ENCODE measurements at regions of chr16 and their contacts with region 1.

Region 1: GRCh38 chr16:89700100-89700648 is 1.3 kb downstream of the SPATA2L start:
- DNase-seq: peak; percentile 96
- H3K4me3 Mint-ChIP-seq: peak overlapping the region; percentile 74
- H3K27ac Mint-ChIP-seq: peak overlapping the region; percentile 78
- H3K4me1 Mint-ChIP-seq: peaks cover 31% of the 10 kb centered on the region
- H3K27me3 Mint-ChIP-seq: no peaks in the 10 kb centered on the region

Region 2: GRCh38 chr16:89686520-89687091 is 13.6 kb before region 1 on chr16 and contains the start of gene CDK10:
- CTCF ChIA-PET with region 1: interaction called, 22 read pairs
- POLR2A ChIA-PET with region 1: no interaction called
- DNase-seq: peak; percentile 88
- H3K4me3 Mint-ChIP-seq: peak within 1 kb of the TSS; percentile 92
- H3K27ac Mint-ChIP-seq: peak within 1 kb of the TSS; percentile 90
- H3K4me1 Mint-ChIP-seq: peaks cover 24% of the 10 kb centered on the region
- H3K27me3 Mint-ChIP-seq: no peaks in the 10 kb centered on the region
- total RNA-seq, gene CDK10: 83.1 to 96.8 TPM

Region 3: GRCh38 chr16:89720813-89721545 is 20.8 kb after region 1 on chr16 and contains the starts of genes VPS9D1 and ZNF276:
- CTCF ChIA-PET with region 1: interaction called, 46 read pairs
- POLR2A ChIA-PET with region 1: no interaction called
- DNase-seq: peak; percentile 84
- H3K4me3 Mint-ChIP-seq: peak within 1 kb of the TSS; percentile 99
- H3K27ac Mint-ChIP-seq: peak within 1 kb of the TSS; percentile 98
- H3K4me1 Mint-ChIP-seq: peaks cover 31% of the 10 kb centered on the region
- H3K27me3 Mint-ChIP-seq: no peaks in the 10 kb centered on the region
- total RNA-seq, gene VPS9D1: 10.8 to 13.4 TPM
- total RNA-seq, gene ZNF276: 79.5 to 96.5 TPM

Region 4: DNA sequence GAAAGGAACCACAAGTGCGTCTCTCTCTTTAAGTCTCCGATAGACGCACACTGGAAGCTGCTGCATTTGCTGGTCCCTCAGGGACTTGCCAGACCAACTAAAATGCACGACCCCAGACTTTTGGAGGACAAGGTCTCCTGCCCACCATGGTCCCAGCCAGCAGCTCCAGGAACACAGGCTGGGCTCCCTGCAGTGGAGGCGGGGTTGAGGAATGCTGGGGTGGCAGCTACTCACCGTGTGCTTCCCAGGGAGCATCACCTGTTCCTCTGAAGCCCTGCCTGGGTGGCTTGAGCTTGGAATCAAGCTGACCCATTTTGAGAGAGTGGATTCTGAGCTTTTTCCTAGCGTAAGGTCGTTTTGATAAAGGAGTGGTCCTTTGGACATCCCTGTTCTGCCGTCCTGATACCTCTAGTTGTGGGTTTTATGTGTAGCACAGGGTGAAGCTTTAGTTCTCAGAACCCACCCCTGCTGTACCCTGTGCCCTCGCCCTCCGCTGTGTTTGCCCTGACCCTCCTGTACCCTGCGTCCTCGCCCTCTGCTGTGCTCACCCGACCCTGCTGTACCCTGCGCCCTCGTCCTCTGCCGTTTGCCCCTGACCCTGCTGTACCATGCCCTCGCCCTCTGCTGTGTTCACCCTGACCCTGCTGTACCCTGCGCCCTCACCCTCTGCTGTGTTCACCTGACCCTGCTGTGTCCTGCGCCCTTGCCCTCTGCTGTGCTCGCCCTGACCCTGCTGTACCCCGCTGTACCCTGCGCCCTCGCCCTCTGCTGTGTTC is 32.2 kb after region 1 on chr16:
- CTCF ChIA-PET with region 1: no interaction called
- POLR2A ChIA-PET with region 1: no interaction called
- DNase-seq: no peak
- H3K4me3 Mint-ChIP-seq: no peak overlapping the region
- H3K27ac Mint-ChIP-seq: no peak overlapping the region
- H3K4me1 Mint-ChIP-seq: peaks cover 60% of the 10 kb centered on the region
- H3K27me3 Mint-ChIP-seq: no peaks in the 10 kb centered on the region

Region 5: DNA sequence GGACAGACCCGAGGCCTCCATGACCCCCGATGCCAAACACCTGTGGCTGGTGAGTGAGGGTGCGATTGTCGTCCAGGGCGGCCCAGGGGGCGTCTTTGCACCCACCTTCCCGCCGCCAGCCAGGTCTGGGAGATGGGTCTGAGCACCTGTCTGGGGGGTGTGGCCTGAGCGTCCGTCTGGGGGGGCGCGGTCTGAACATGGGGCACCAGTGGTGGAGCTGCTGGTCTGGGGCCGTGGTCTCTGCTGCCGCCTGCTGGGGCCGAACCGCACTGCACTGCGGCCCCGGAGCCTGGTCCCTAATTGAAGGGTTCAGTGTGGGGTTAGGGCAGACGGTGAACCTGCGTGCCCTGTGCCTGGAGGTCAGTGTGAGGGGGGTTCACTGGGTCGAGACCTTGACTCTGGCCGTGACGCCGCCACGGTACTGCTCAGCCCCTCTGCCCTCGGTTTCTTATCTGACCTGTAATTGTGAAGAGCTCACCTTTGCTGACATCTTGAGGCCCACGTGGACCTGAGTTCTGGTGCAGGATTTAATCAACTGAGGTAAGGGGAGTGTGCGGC is 160.7 kb after region 1 on chr16:
- CTCF ChIA-PET with region 1: interaction called, 38 read pairs
- POLR2A ChIA-PET with region 1: no interaction called
- DNase-seq: peak; percentile 75
- H3K4me3 Mint-ChIP-seq: no peak overlapping the region
- H3K27ac Mint-ChIP-seq: no peak overlapping the region
- H3K4me1 Mint-ChIP-seq: peaks cover 39% of the 10 kb centered on the region
- H3K27me3 Mint-ChIP-seq: no peaks in the 10 kb centered on the region

Region 6: DNA sequence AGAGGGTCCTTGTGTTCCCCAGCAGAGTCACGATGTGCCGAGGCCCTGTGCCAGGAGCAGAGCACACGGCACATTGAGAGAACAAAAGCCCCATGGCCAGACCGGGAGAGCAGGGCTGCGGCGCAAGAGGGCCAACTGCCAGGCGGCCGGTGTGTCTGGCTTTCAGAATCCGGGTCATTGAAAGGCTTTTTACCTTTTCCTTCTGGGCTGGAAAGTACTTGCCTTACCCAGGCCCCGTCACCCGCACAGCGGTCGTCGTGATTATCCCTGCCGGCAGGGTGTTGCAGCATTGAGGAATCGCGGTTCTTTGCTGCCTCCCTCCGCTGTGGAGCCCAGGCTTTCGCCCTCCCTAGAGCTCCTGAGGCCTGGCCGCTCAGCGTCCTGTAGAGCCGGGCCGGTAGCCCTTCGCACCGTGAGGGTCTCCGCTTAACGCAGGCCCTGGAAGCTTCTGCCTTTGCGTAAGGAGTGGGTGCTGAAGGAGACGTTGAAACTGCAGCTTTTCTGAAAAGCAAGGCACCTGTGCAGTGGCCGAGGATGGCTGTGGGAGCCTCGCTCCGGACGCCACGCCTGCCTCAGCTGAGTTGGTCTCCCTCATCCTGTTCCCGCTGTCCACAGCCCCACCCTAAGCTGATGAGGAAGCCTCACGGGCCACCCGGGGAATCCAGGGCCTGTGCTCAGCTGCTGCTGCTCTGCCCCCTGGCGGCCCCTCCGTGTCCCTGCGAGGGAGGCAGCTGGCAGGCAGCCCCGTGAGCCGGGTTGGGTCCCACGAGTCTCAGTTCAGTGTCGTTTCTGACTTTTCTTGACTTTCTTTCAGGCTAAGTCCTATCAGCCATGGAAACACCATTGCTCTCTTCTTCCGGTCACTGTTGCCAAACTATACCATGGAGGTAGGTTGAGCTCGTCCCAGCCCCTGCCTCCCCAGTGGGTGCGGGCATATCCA is 209.9 kb after region 1 on chr16:
- CTCF ChIA-PET with region 1: interaction called, 15 read pairs
- POLR2A ChIA-PET with region 1: no interaction called
- DNase-seq: peak; percentile 70
- H3K4me3 Mint-ChIP-seq: no peak overlapping the region
- H3K27ac Mint-ChIP-seq: no peak overlapping the region
- H3K4me1 Mint-ChIP-seq: peaks cover 8% of the 10 kb centered on the region
- H3K27me3 Mint-ChIP-seq: no peaks in the 10 kb centered on the region